ENCODE measurements at regions of chr10 and their contacts with region 1.

Region 1: GRCh38 chr10:88114368-88114767 is 250.9 kb downstream of the PTEN start:
- DNase-seq: no peak
- H3K4me3 ChIP-seq: no peak overlapping the region
- H3K27ac ChIP-seq: no peak overlapping the region
- H3K4me1 ChIP-seq: peaks cover 28% of the 10 kb centered on the region
- H3K27me3 ChIP-seq: no peaks in the 10 kb centered on the region
- CTCF ChIP-seq: peak; percentile 38 to 52

Region 2: DNA sequence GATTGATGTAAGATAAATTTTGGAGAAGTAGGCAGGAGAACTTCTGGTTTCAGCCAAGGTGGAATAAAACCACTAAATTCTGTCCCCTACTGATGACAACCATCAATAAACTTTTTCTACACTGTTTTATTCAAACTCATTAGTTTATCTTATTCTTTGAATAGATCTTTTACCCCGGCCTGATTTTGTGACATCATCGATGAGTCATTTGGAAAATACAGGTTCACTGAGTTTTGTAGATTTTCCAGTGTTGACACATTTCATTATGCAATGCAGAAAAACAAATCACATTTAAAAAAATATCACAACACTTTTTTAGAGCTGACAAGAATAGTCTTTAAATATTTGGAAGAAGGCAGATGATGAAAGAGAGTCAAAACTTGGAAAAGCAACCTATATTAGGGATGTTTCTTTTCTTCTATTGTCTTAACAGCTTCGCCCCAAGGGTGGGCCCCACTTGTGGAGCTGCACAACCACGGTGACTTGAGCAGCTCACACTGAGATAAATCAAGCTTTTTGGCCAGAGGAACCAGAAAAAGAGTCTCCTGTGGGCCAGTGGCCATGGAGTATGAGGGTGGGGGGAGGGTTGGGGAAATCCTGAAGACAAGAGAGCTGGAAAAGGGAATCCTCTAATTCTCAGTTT is 138.1 kb before region 1 on chr10:
- CTCF ChIA-PET with region 1: no interaction called
- dilution Hi-C with region 1: no loop called
- in situ Hi-C with region 1: no loop called
- intact Hi-C with region 1: loop called (anchors 5 kb)
- DNase-seq: peak; percentile 52
- H3K4me3 ChIP-seq: no peak overlapping the region
- H3K27ac ChIP-seq: no peak overlapping the region
- H3K4me1 ChIP-seq: peaks cover 13% of the 10 kb centered on the region
- H3K27me3 ChIP-seq: no peaks in the 10 kb centered on the region
- CTCF ChIP-seq: no peak

Region 3: DNA sequence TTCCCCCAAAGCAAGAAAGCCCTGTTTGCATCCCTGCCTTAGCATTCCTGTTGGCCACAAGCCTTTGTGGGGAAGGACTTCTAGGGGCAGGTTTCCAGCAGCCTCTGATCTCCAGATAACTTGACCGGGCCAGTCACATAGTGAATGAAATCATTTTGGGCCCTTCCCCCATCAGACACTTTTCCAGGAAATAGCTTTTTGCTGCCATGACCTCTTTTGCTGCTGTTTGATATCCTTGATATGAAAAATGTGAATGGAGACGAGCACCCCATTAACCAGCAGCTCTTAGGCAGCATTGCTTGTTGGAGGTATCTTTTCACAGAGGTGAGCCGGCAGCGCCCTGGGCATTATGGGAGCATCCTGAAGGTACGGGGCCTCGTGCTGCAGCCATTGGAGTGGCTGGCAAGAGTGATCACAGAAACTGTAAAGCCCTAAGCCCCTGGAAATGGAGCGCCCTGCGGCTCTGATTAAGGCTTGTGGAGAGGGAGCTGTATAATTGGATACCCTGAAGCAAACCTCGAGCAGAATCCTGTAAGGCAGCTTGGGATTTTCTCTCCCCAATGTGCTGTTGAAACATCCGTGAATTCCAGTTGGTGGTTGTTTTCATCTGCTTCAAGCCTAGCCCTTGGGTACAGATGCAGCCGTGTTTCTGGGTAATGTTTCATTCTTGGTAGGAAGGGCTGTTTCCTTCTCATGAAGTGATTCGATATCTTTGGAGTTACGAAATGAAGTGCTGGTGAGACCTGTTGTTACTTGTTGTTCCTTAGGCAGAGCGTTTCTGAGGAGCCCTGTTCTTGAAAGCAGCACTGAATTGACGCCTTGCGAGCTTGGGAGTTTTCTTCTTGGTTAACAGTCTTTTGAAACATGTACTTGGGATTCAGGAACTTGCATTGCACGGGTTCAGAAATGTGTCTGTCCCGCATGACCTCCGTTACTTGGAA is 71.9 kb before region 1 on chr10:
- CTCF ChIA-PET with region 1: no interaction called
- dilution Hi-C with region 1: no loop called
- in situ Hi-C with region 1: no loop called
- intact Hi-C with region 1: loop called (anchors 2 kb)
- DNase-seq: peak; percentile 93
- H3K4me3 ChIP-seq: peak overlapping the region in 2 of 3 experiments; percentile 1 to 9
- H3K27ac ChIP-seq: peak overlapping the region; percentile 37
- H3K4me1 ChIP-seq: peaks cover 22% of the 10 kb centered on the region
- H3K27me3 ChIP-seq: no peaks in the 10 kb centered on the region
- CTCF ChIP-seq: no peak

Measured in mammary epithelial cell (primary cell).